ENCODE measurements at regions of chr2 and their contacts with region 1.

Region 1: GRCh38 chr2:98771721-98772524 is 41.0 kb upstream of the MGAT4A start:
- DNase-seq: peak; percentile 38 to 93 (median 89)
- ATAC-seq: peak; percentile 83
- H3K4me3 ChIP-seq: peak overlapping the region; percentile 43
- H3K4me3 Mint-ChIP-seq: peak overlapping the region; percentile 82 to 99 (median 91)
- H3K27ac ChIP-seq: peak overlapping the region; percentile 84
- H3K27ac Mint-ChIP-seq: peak overlapping the region; percentile 95 to 99 (median 98)
- H3K4me1 ChIP-seq: peaks cover 59 to 67% of the 10 kb centered on the region in 2 donors
- H3K4me1 Mint-ChIP-seq: peaks cover 56 to 95% (median 86%) of the 10 kb centered on the region in 7 donors
- H3K27me3 ChIP-seq: no peaks in the 10 kb centered on the region
- H3K27me3 Mint-ChIP-seq: no peaks in the 10 kb centered on the region

Region 2: DNA sequence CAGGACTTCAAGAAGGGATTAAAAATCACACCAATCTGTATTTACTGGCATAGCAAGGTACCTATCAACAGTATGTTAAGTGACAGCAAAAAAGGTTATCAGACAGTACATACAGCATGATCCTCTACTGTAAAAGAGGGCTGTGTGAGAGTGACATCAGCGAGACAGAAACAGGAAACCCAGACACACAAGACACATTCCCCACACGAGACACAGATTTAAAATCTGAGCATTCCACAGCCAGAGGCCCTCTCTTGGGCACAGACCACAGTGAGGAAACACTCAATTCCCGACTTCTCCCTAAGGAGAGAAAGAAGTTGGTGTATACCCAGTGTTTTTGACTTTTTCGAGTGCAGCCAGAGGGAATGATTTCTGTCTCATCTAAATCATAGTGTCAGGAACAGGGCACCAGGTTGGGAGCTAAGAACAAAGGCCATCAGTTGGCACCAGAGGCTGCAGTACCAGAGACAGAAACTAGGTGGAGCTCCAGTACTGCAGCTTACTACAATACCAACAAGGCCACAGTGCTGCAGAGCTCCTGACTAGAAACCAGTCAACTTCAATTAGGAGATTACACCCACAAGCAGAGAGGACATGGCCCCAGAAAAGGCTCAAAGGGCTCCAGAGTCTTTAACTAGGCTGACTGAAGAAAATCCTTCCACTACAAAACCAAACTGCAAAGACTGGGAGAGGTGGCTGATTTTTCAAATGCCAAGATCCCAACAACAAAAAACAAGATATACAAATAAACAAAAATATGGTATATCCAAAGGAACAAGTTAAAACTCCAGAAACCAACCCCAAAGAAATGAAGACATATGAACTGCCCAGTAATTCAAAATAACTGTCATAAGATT is 122.6 kb before region 1 on chr2:
- CTCF ChIA-PET with region 1: interaction called, 6 read pairs
- POLR2A ChIA-PET with region 1: interaction called, 140 read pairs
- intact Hi-C with region 1: loop called (anchors 1 to 2 kb)
- DNase-seq: peak; percentile 53 to 87 (median 80)
- ATAC-seq: peak; percentile 99
- H3K4me3 ChIP-seq: no peak overlapping the region
- H3K4me3 Mint-ChIP-seq: peak overlapping the region in 8 of 10 donors; percentile 5 to 66 (median 50)
- H3K27ac ChIP-seq: peak overlapping the region; percentile 39
- H3K27ac Mint-ChIP-seq: peak overlapping the region; percentile 73 to 96 (median 92)
- H3K4me1 ChIP-seq: peaks cover 29 to 44% of the 10 kb centered on the region in 2 donors
- H3K4me1 Mint-ChIP-seq: peaks cover 40 to 66% (median 57%) of the 10 kb centered on the region in 7 donors
- H3K27me3 ChIP-seq: no peaks in the 10 kb centered on the region
- H3K27me3 Mint-ChIP-seq: no peaks in the 10 kb centered on the region

Region 3: DNA sequence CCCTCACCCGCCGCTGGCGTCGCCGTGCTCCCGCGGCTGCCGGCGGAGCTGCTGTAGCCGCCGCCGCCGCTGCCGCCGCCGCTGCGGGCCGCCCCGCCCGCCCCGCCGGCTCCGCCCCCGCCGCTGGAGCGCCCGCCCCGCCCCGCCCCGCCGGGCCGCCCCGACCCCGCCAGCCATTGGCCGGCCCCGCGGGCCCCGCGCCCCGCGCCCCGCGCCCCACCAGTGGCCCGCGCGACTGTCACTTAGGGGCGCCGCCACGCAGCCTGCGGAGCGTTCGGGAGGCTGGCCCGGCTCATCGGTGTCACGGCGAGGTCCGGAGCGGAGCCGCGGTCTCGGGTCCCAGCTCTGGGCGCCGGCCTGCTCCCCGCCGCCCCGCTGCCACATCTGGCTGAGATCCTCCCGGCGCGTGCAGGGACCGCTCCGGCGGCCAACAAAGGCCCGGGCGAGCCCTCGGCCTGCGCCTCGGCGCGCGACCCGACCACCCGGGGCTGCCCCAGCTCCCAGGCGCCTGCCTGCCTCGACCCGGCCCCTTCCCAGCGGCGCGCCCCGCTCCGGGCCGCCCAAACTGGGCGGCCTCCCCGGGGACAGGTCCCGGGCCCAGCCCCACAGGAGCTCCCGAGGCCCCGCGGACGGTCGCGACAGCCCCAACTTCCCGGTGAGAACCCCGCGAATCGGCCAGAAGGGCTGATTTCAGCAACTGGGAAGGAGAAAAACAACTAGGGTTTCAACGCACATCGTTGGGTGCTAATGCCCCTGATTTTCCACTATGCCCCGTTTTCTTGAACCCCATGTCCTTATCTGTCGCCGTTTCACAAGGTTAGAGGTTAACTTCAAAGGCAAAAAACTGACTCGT is 40.7 kb before region 1 on chr2 and contains the start of gene MGAT4A:
- CTCF ChIA-PET with region 1: interaction called, 13 read pairs
- POLR2A ChIA-PET with region 1: interaction called, 604 read pairs
- intact Hi-C with region 1: loop called (anchors 1 kb)
- DNase-seq: peak; percentile 74 to 85 (median 82)
- ATAC-seq: peak; percentile 88
- H3K4me3 ChIP-seq: peak within 1 kb of the TSS; percentile 79
- H3K4me3 Mint-ChIP-seq: peak within 1 kb of the TSS; percentile 89 to 98 (median 94)
- H3K27ac ChIP-seq: peak within 1 kb of the TSS; percentile 98
- H3K27ac Mint-ChIP-seq: peak within 1 kb of the TSS; percentile 90 to 98 (median 96)
- H3K4me1 ChIP-seq: peaks cover 48% of the 10 kb centered on the region in 2 donors
- H3K4me1 Mint-ChIP-seq: peaks cover 27 to 75% (median 64%) of the 10 kb centered on the region in 7 donors
- H3K27me3 ChIP-seq: no peaks in the 10 kb centered on the region
- H3K27me3 Mint-ChIP-seq: no peaks in the 10 kb centered on the region
- total RNA-seq, gene MGAT4A: 125 to 308 (median 240) TPM

Region 4: DNA sequence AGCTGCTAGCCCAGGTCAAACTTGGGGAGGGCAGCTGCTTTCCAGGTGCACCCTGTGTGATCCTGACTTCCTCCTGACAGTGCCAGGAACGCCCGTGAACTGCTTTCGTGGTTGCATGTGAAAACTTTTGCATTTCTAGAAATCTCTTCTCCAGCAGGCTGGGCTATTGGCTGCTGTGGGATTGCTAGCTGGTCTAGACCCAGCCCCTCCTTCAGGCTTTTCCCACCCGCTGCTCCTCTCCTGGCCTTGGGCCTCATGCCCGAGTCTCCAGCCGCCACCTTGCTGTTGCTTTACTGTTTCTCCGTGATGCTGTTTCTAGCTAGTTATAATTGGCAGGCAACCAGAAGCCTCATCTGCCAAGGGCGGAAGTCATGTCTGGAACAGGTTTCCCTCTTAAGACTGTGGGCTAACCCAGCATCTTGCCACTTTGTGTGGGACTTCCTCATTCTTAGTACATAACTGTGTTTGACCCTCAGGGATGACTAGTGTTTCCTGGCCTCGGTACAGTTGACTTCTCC is 14.0 kb before region 1 on chr2:
- CTCF ChIA-PET with region 1: interaction called, 9 read pairs
- POLR2A ChIA-PET with region 1: interaction called, 122 read pairs
- intact Hi-C with region 1: loop called (anchors 1 kb)
- DNase-seq: peak in 8 of 9 donors; percentile 46 to 79 (median 74)
- ATAC-seq: peak; percentile 89
- H3K4me3 ChIP-seq: peak overlapping the region; percentile 46
- H3K4me3 Mint-ChIP-seq: peak overlapping the region; percentile 79 to 98 (median 85)
- H3K27ac ChIP-seq: peak overlapping the region; percentile 70
- H3K27ac Mint-ChIP-seq: peak overlapping the region; percentile 91 to 100 (median 97)
- H3K4me1 ChIP-seq: peaks cover 45 to 70% of the 10 kb centered on the region in 2 donors
- H3K4me1 Mint-ChIP-seq: peaks cover 56 to 97% (median 80%) of the 10 kb centered on the region in 7 donors
- H3K27me3 ChIP-seq: no peaks in the 10 kb centered on the region
- H3K27me3 Mint-ChIP-seq: no peaks in the 10 kb centered on the region

Region 5: DNA sequence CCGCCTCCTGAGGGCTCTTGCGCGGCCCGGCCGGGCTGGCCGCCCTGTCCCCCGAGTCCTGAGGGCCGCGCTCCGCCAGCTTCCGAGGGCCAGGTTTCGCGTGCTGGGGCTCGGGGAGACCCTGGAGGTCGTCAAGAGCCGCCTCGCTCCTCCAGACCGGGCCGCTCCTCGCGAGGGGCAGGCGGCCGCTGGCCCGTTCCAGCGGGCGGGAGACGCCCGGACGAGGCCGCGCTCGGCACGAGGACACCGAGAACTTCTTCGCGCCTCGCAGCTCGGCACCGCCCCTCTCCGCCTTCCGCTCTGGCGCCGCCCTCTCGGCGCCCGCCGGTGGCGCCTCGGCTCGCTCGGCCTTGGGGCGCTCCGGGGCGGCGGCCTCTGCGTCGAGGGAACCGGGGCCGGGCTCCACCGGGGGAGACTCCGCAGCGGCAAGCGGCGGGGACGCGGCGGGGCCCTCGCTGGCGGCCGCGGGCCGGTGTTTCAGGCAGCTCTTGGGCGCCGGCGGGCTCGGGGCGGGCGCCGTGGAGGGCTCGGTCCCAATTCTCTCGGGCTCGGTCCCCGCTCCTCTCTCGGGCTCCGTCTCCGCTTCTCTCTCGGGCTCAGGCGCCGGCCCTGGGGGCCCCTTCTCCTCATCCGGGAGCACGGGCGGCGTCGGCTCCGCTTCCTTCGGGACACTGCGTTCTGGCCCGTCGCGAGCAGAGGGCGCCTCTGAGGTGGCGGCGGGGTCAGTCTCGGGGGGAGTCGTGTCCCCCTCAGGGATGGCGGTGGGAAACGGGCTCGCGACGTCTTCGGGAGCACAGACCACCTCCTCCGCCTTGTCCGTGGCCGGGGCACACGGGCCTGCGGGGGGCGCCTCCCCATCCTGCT is 50.6 kb after region 1 on chr2:
- CTCF ChIA-PET with region 1: interaction called, 6 read pairs
- POLR2A ChIA-PET with region 1: interaction called, 31 read pairs
- intact Hi-C with region 1: loop called (anchors 1 to 2 kb)
- DNase-seq: peak; percentile 49 to 78 (median 66)
- ATAC-seq: peak; percentile 94
- H3K4me3 ChIP-seq: peak overlapping the region; percentile 43
- H3K4me3 Mint-ChIP-seq: peak overlapping the region in 9 of 10 donors; percentile 24 to 63 (median 45)
- H3K27ac ChIP-seq: peak overlapping the region; percentile 66
- H3K27ac Mint-ChIP-seq: no peak overlapping the region
- H3K4me1 ChIP-seq: peaks cover 0 to under 1% of the 10 kb centered on the region in 2 donors
- H3K4me1 Mint-ChIP-seq: peaks cover 19 to 40% (median 25%) of the 10 kb centered on the region in 7 donors
- H3K27me3 ChIP-seq: no peaks in the 10 kb centered on the region
- H3K27me3 Mint-ChIP-seq: peaks cover 0 to 9% (median 0%) of the 10 kb centered on the region in 5 donors

Region 6: DNA sequence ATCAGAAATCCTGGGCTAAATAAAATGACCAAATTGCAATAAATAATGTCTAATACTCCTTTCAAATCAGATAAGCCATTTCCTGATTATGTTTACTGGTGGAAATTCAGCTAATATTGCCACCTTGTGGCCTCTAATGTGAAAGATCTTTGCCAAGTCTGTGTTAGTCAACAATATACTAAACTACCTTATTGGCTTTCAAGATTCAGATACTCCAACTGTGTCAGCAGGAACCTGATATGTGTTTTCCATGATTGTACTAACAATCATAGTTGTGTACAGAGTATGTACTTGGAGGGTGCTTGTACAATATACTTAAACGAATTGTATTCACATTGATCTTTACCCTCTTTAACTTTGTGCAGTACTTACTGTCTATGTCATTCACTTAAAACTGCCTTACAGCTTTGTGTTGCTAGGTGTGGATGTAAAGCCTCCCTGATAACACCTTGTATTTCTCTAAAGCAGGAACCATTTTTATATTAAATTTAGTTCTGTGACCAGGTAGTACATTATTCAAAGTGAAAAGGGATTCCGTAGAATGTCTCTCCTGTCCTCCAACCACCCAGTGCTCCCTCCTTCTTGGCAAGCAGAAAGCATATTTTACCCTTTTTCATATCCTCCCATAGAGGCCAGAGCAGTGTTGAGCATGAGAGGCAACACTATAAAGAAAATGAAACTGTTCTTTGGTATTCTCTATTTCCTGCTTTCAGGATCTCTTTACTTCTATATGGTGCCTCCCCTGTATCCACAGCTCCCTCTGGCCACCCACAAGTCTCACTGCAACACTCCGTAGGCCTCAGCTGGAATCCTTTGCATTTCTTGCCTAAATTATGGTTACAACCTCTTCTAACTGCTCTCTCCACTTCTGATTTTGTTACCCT is 294.4 kb after region 1 on chr2:
- CTCF ChIA-PET with region 1: no interaction called
- POLR2A ChIA-PET with region 1: interaction called, 3 read pairs
- intact Hi-C with region 1: loop called in 1 of 2 experiments (anchors 2 kb)
- DNase-seq: peak in 7 of 9 donors; percentile 22 to 54 (median 40)
- ATAC-seq: peak; percentile 93
- H3K4me3 ChIP-seq: no peak overlapping the region
- H3K4me3 Mint-ChIP-seq: no peak overlapping the region
- H3K27ac ChIP-seq: peak overlapping the region; percentile 52
- H3K27ac Mint-ChIP-seq: no peak overlapping the region
- H3K4me1 ChIP-seq: peaks cover 8 to 23% of the 10 kb centered on the region in 2 donors
- H3K4me1 Mint-ChIP-seq: peaks cover 0 to 6% (median 0%) of the 10 kb centered on the region in 7 donors
- H3K27me3 ChIP-seq: no peaks in the 10 kb centered on the region
- H3K27me3 Mint-ChIP-seq: peaks cover 0 to 3% (median 0%) of the 10 kb centered on the region in 5 donors

Region 7: GRCh38 chr2:99337113-99338028 is 565.4 kb after region 1 on chr2 and contains the start of gene EIF5B:
- CTCF ChIA-PET with region 1: no interaction called
- POLR2A ChIA-PET with region 1: no interaction called
- intact Hi-C with region 1: loop called (anchors 2 kb)
- DNase-seq: peak; percentile 78 to 92 (median 84)
- ATAC-seq: peak; percentile 78
- H3K4me3 ChIP-seq: peak within 1 kb of the TSS; percentile 85
- H3K4me3 Mint-ChIP-seq: no peak within 1 kb of the TSS
- H3K27ac ChIP-seq: peak within 1 kb of the TSS; percentile 78
- H3K27ac Mint-ChIP-seq: no peak within 1 kb of the TSS
- H3K4me1 ChIP-seq: peaks cover 20 to 25% of the 10 kb centered on the region in 2 donors
- H3K4me1 Mint-ChIP-seq: peaks cover 20 to 49% (median 45%) of the 10 kb centered on the region in 7 donors
- H3K27me3 ChIP-seq: no peaks in the 10 kb centered on the region
- H3K27me3 Mint-ChIP-seq: no peaks in the 10 kb centered on the region
- total RNA-seq, gene EIF5B: 28.0 to 49.0 (median 37.6) TPM